Activated CD8-positive, alpha-beta memory T cell treated with anti-CD3 and anti-CD28 coated beads, Interleukin-2, amount 10 ng/mL, durations not matched to agents 7 days and 5 days (primary cell): ENCODE measurements at regions of chr3 and their contacts with region 1.

Region 1: GRCh38 chr3:57555738-57556458 is at the start of gene PDE12:
- DNase-seq: peak; percentile 90
- ATAC-seq: peak; percentile 84
- H3K4me3 Mint-ChIP-seq: peak within 1 kb of the TSS; percentile 97
- H3K27ac Mint-ChIP-seq: peak within 1 kb of the TSS; percentile 98
- H3K4me1 Mint-ChIP-seq: peaks cover 39% of the 10 kb centered on the region
- H3K27me3 Mint-ChIP-seq: no peaks in the 10 kb centered on the region
- total RNA-seq, gene PDE12: 30.3 to 36.5 TPM

Region 2: DNA sequence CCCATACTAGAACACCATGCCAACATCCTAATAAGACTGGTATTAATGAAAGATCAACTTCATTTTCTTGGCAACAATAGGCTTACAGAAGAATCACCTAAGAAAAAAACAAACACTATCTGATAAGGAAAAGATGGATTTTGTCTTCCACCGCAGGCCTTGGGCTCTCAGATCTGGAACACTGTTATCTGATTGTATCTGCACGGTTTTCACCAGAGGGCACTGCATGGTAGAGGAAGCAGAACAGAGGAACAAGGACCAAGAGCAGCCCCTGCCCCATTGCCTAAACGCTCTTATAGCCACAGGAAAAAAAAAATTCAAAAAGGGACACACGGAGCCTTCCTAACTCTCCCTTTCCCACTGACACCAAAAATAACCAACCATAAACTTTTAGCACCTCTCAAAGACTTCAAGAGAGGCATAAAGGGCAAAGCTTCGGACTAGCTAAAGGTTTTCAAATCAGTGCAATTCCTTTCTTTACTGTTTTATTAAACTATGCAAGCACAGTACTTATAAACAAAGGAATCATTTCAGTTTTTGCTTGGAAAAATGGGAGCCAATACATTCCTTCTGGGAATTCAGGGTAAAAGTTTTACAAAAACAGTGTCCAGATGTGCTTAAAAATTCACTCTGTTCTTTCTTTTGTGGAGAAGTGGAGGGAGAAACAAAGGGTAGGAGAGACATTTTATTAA is 414.0 kb before region 1 on chr3:
- CTCF ChIA-PET with region 1: no interaction called
- DNase-seq: no peak
- ATAC-seq: no peak
- H3K4me3 Mint-ChIP-seq: no peak overlapping the region
- H3K27ac Mint-ChIP-seq: no peak overlapping the region
- H3K4me1 Mint-ChIP-seq: no peaks in the 10 kb centered on the region
- H3K27me3 Mint-ChIP-seq: peaks cover 50% of the 10 kb centered on the region

Region 3: DNA sequence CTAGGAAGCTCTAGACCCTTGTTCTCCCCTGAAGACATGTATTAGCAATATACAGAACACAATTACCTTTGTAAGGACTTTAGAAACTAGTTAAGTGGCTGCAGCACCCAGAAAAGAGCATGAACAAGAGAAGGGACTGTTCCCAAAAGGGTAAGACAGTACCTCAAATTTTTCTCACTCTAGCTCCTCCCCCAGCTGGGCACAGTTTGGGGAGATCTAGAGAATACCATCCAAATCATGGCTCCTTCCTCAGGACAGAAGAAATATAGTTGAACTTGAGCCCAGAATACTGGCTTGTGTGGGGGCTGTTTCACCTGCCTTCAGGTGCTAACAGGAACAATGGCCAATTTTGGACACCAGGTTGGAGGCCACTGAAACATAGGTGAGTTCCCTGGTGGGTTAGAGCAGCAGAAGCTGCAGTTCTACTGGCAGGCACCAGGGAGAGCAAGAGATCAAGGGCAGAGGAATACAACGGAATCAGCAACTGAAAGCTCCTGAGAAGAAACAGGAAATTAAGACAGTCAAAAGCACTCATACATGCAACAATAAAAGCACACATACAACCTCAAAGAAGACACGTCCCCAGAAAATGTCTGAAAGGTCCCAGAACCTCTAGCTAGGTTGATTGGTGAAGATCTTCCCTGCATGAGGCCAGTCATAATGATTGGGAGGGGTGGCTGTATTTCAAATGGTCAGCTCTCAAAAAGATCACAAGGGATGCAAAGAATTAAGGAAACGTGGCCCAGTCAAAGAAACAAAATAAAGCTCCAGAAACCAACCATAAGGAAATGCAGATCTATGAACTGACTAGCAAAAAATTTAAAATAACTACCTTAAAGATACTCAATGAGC is 158.5 kb before region 1 on chr3:
- CTCF ChIA-PET with region 1: interaction called, 11 read pairs
- DNase-seq: peak; percentile 76
- ATAC-seq: peak; percentile 99
- H3K4me3 Mint-ChIP-seq: peak overlapping the region; percentile 1
- H3K27ac Mint-ChIP-seq: peak overlapping the region; percentile 58
- H3K4me1 Mint-ChIP-seq: peaks cover 11% of the 10 kb centered on the region
- H3K27me3 Mint-ChIP-seq: peaks cover 22% of the 10 kb centered on the region

Region 4: GRCh38 chr3:57530071-57530608 is 25.8 kb before region 1 on chr3:
- CTCF ChIA-PET with region 1: no interaction called
- DNase-seq: no peak
- ATAC-seq: no peak
- H3K4me3 Mint-ChIP-seq: no peak overlapping the region
- H3K27ac Mint-ChIP-seq: no peak overlapping the region
- H3K4me1 Mint-ChIP-seq: no peaks in the 10 kb centered on the region
- H3K27me3 Mint-ChIP-seq: peaks cover 10% of the 10 kb centered on the region

Region 5: DNA sequence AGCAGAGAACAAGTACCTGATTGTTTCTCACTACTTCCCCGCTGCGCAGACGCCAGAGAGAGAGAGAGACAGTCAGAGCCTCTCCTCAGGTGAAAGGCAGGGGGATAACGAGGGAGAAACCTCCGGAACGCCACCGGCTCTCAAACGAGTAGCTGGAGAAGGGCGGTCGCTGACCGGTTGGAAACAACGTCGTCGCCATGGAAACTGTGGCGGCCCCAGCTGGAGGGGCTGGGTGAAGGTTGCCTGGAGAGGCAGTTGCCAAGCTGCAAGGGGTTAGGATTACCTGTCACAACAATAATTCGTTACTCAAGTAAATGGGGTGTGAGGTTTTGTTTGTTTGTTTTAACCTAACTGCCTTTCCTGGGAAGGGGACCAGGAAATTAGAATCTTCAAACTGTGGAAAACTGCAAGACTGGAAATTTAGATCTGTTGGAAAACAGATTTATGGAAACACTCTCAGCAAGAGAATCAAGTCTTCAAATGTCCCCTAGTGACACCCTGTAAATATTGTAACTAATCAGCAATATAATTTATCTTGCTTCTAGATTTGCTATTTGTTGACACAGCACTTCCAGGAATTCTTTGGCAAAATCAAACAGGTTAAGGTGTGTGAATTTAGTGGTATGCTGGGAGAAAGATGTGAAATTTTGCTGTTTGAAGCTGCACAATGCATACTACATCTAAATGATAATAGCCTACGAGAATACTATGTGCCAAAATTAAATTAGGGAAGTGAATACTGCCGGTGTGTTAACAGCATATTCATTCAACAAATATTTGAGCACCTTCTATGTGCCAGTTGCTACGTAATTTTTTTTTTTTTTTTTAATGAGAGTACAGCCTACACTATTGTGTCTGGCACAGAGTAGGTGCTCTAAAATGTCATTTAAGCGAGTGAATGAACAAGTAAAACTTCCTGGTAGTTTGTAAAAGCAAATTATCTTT is 11.4 kb before region 1 on chr3 and contains the start of gene DNAH12:
- CTCF ChIA-PET with region 1: no interaction called
- DNase-seq: peak; percentile 49
- ATAC-seq: peak; percentile 23
- H3K4me3 Mint-ChIP-seq: no peak within 1 kb of the TSS
- H3K27ac Mint-ChIP-seq: no peak within 1 kb of the TSS
- H3K4me1 Mint-ChIP-seq: peaks cover 7% of the 10 kb centered on the region
- H3K27me3 Mint-ChIP-seq: no peaks in the 10 kb centered on the region
- total RNA-seq, gene DNAH12: 0.06 TPM in 1 of 2 experiments, not detected in the other

Region 6: GRCh38 chr3:57597122-57597923 is 41.4 kb after region 1 on chr3 and contains the start of gene ARF4:
- CTCF ChIA-PET with region 1: interaction called, 18 read pairs
- DNase-seq: peak; percentile 100
- ATAC-seq: peak; percentile 92
- H3K4me3 Mint-ChIP-seq: peak within 1 kb of the TSS; percentile 92
- H3K27ac Mint-ChIP-seq: peak within 1 kb of the TSS; percentile 98
- H3K4me1 Mint-ChIP-seq: peaks cover 33% of the 10 kb centered on the region
- H3K27me3 Mint-ChIP-seq: no peaks in the 10 kb centered on the region
- total RNA-seq, gene ARF4: 51.3 to 61.6 TPM